ENCODE measurements at regions of chr1 and their contacts with region 1.

Region 1: DNA sequence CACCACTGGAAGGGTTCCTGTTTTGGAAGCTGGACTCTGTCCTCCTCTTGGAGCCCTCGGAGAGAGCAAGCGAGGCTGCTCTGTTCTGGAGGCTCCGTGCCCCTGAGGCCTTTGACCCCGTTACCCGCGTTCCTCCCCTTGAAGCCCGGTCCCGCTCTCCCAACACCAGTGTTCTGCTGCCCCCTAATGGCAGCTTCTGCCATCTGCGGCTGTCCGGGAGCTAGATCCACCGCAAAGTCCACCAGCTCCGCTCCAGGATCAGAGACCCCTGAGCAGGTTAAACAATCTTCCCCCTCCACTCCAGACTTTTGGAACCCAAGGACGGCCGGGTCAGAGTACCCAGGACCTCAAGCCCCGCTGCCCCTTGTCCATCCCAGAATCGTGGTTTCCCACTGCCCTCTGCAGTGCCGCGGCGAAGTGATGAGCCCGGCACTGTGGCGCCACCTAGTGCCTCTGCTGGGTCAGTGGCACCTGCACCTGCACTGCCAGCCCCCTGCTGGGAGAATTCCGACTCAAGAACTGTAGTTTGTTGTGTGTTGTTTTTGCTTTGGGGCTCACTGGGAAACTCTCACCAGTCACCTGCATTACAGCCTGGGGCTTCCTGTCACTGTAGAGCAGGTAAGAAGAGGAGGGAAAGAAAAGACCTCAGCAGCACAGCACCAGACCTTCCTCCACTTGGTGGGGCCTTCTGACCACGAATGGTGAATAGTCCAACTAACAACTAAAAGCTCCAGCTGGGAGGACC is 63.5 kb upstream of the NFASC start:
- DNase-seq: peak; percentile 89
- H3K4me3 ChIP-seq: peak overlapping the region; percentile 50 to 81
- H3K27ac ChIP-seq: no peak overlapping the region; a peak in 1 of 4 replicates
- H3K4me1 ChIP-seq: peaks cover 0 to 2% of the 10 kb centered on the region in 2 experiments; a peak in 1 of 4 replicates
- H3K27me3 ChIP-seq: 0 out of 2 replicates have a peak, but pooled peaks cover 2% of the 10 kb centered on the region
- CTCF ChIP-seq: peak; percentile 100
- EP300 ChIP-seq: no peak
- RAD21 ChIP-seq: peak; percentile 72

Region 2: DNA sequence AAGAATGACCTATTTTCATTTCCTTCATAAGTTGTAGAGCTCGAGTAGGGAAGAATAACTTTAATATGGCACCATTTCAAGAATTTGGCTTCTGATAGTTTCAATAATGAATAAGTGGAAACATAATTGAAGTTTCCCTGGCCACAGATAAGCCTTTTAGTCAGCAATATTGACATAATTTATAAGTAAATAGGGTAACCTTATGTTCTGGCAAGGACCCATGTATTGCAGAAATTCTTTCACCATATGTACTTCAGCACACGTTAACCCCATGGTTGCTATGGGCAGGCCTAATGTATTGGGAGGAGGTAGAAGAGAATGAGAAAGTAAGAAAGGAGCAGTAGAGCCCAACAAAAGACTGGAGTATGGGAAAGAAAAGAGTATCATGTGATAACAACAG is 265.5 kb before region 1 on chr1:
- CTCF ChIA-PET with region 1: interaction called, 54 read pairs
- POLR2A ChIA-PET with region 1: no interaction called
- DNase-seq: no peak
- H3K4me3 ChIP-seq: no peak overlapping the region
- H3K27ac ChIP-seq: no peak overlapping the region
- H3K4me1 ChIP-seq: no peaks in the 10 kb centered on the region
- H3K27me3 ChIP-seq: no peaks in the 10 kb centered on the region
- CTCF ChIP-seq: no peak
- EP300 ChIP-seq: no peak
- RAD21 ChIP-seq: no peak

Region 3: GRCh38 chr1:204633665-204634064 is 173.4 kb before region 1 on chr1:
- CTCF ChIA-PET with region 1: interaction called, 19 read pairs
- POLR2A ChIA-PET with region 1: no interaction called
- DNase-seq: no peak
- H3K4me3 ChIP-seq: no peak overlapping the region
- H3K27ac ChIP-seq: no peak overlapping the region
- H3K4me1 ChIP-seq: peaks cover 0 to 29% of the 10 kb centered on the region in 2 experiments; a peak in 2 of 4 replicates
- H3K27me3 ChIP-seq: peaks cover 4% of the 10 kb centered on the region; the same call in 1 of the 2 replicates
- CTCF ChIP-seq: no peak
- EP300 ChIP-seq: no peak
- RAD21 ChIP-seq: no peak

Region 4: DNA sequence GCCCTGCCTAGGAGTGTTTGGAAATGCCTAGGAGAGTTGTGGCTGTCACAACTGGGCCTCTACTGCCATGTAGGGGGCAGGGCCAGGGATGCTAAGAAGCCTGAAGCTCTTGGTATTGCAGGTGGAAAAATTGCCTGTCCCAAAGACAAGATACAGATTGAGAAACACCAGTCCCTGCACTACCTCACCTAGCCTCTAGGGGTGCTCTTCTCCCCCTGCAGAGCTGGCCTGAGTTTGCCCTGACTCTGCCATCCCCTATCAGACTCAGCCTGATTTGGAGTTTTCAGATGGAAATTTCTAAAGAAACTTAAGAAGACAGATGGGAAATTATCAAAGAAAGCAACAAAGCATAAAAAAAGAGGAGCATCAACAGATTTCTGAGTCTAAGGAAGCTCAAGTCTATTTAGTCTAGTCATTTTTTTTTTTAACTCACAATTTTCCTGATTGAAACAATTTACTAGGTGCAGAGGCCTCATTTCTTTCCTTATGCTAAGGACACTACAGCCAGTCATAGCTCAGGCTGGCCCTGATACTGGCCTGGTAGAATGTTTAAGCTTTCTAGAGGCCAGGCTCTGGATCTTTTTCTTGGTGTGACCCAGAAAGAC is 60.2 kb before region 1 on chr1:
- CTCF ChIA-PET with region 1: interaction called, 32 read pairs
- POLR2A ChIA-PET with region 1: no interaction called
- DNase-seq: peak; percentile 52
- H3K4me3 ChIP-seq: peak overlapping the region in 1 of 2 experiments; percentile 14; a peak in 1 of 4 replicates
- H3K27ac ChIP-seq: no peak overlapping the region
- H3K4me1 ChIP-seq: peaks cover 0 to 21% of the 10 kb centered on the region in 2 experiments; a peak in 2 of 4 replicates
- H3K27me3 ChIP-seq: peaks cover 22% of the 10 kb centered on the region; the same call in 1 of the 2 replicates
- CTCF ChIP-seq: peak; percentile 86
- EP300 ChIP-seq: no peak
- RAD21 ChIP-seq: peak; percentile 53

Region 5: GRCh38 chr1:204828338-204828850 is 21.3 kb after region 1 on chr1:
- CTCF ChIA-PET with region 1: interaction called, 291 read pairs
- POLR2A ChIA-PET with region 1: no interaction called
- DNase-seq: peak; percentile 98
- H3K4me3 ChIP-seq: peak overlapping the region; percentile 49 to 54
- H3K27ac ChIP-seq: no peak overlapping the region
- H3K4me1 ChIP-seq: peaks cover 0 to 11% of the 10 kb centered on the region in 2 experiments; a peak in 1 of 4 replicates
- H3K27me3 ChIP-seq: no peaks in the 10 kb centered on the region; the same call in 1 of the 2 replicates
- CTCF ChIP-seq: peak; percentile 26
- EP300 ChIP-seq: no peak
- RAD21 ChIP-seq: no peak

Region 6: DNA sequence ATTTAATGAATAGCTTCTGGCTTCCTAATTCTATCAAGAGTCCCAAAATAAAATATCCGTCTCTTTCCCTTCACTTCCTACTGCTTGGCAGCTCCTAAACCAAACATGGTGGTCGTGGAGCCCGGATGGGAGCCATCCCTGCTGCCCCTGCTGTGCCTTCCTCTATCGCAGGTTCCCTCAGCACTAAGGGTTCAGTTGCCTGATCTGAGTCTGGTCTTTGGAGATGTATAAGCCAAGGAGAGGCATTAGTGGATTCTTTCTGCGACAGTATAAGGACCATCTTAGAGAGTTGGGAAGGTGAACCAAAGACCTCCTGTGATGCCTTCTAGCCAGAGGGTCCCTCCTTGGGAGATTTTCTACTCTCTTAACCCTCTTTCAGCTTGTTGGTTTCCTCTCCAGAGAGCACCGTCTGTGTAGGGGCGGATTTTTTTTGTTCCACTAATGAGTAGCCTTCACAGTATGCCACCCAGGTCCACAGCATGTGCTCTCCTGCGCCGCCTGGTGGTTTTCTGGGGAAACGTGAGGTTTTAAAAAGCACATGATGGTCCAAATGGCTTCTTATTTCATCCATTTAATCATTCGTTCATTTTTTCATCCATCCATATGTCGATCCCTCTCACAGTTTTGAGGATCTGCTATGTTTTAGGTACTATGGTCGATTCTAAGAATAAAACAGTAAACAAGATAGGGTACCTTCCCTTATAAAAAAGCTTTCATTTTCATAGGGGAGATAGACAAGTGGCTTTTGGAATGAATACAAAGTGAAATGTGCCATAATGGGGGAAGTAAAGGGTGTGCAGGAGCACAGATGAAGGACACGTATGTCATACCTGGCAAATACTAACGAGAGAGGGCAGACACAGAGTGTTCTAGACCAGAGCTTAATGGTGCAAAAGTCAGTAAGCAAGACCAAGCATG is 134.6 kb after region 1 on chr1:
- CTCF ChIA-PET with region 1: interaction called, 337 read pairs
- POLR2A ChIA-PET with region 1: no interaction called
- DNase-seq: peak; percentile 77
- H3K4me3 ChIP-seq: no peak overlapping the region; a peak in 1 of 4 replicates
- H3K27ac ChIP-seq: no peak overlapping the region
- H3K4me1 ChIP-seq: no peaks in the 10 kb centered on the region
- H3K27me3 ChIP-seq: no peaks in the 10 kb centered on the region
- CTCF ChIP-seq: peak; percentile 84
- EP300 ChIP-seq: no peak
- RAD21 ChIP-seq: peak; percentile 77

Region 7: DNA sequence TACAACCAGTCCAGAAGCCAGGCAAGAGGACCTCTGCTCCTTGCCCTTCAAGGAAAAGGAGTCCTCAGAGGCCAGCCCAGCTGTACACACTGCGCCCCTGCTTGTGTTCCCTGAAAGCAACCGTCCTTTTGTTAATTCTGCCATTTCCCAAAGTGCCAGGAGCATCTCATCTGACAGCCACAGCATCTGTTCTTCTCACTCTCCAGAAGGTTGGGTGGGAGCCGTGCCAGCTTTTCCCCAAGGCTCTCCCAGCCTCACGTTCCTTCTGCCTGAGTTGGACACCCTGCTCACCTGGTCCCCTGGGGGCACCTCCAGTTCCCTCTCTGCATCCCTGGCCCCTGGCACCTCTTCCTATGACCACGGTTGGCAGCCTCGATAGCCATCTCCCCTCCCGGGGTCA is 225.4 kb after region 1 on chr1:
- CTCF ChIA-PET with region 1: no interaction called
- POLR2A ChIA-PET with region 1: no interaction called
- DNase-seq: no peak
- H3K4me3 ChIP-seq: no peak overlapping the region
- H3K27ac ChIP-seq: no peak overlapping the region
- H3K4me1 ChIP-seq: peaks cover 0 to 8% of the 10 kb centered on the region in 2 experiments; a peak in 1 of 4 replicates
- H3K27me3 ChIP-seq: peaks cover 22% of the 10 kb centered on the region
- CTCF ChIP-seq: no peak
- EP300 ChIP-seq: no peak
- RAD21 ChIP-seq: no peak

Region 8: GRCh38 chr1:205719762-205720161 is 912.6 kb after region 1 on chr1:
- CTCF ChIA-PET with region 1: no interaction called
- POLR2A ChIA-PET with region 1: no interaction called
- DNase-seq: no peak
- H3K4me3 ChIP-seq: no peak overlapping the region
- H3K27ac ChIP-seq: no peak overlapping the region
- H3K4me1 ChIP-seq: no peaks in the 10 kb centered on the region
- H3K27me3 ChIP-seq: no peaks in the 10 kb centered on the region
- CTCF ChIP-seq: no peak
- EP300 ChIP-seq: no peak
- RAD21 ChIP-seq: no peak

Measured in SK-N-SH (cell line).